H1 (cell line): ENCODE measurements at regions of chr1 and their contacts with region 1.

Region 1: GRCh38 chr1:40143891-40144575 is 17.2 kb upstream of the RLF start:
- DNase-seq: peak; percentile 43 to 75
- H3K4me3 ChIP-seq: no peak overlapping the region
- H3K27ac ChIP-seq: no peak overlapping the region
- H3K4me1 ChIP-seq: peaks cover 0 to 2% (median 0%) of the 10 kb centered on the region in 4 experiments; a peak in 1 of 7 replicates
- H3K27me3 ChIP-seq: peaks cover 0 to 2% (median under 1%) of the 10 kb centered on the region in 4 experiments; a peak in 3 of 7 replicates
- CTCF ChIP-seq: peak in 2 of 3 experiments; percentile 80 to 88; a peak in 3 of 4 replicates
- EP300 ChIP-seq: no peak
- POLR2A ChIP-seq: peak in 1 of 2 experiments; percentile 41; a peak in 1 of 3 replicates
- RAD21 ChIP-seq: peak; percentile 88 to 89

Region 2: GRCh38 chr1:39876144-39876543 is 267.9 kb before region 1 on chr1:
- CTCF ChIA-PET with region 1: no interaction called
- POLR2A ChIA-PET with region 1: no interaction called
- DNase-seq: no peak
- H3K4me3 ChIP-seq: no peak overlapping the region
- H3K27ac ChIP-seq: no peak overlapping the region
- H3K4me1 ChIP-seq: peaks cover 0 to 6% (median 2%) of the 10 kb centered on the region in 4 experiments; a peak in 3 of 7 replicates
- H3K27me3 ChIP-seq: no peaks in the 10 kb centered on the region; a peak in 1 of 7 replicates
- CTCF ChIP-seq: no peak
- EP300 ChIP-seq: no peak
- POLR2A ChIP-seq: no peak
- RAD21 ChIP-seq: no peak

Region 3: DNA sequence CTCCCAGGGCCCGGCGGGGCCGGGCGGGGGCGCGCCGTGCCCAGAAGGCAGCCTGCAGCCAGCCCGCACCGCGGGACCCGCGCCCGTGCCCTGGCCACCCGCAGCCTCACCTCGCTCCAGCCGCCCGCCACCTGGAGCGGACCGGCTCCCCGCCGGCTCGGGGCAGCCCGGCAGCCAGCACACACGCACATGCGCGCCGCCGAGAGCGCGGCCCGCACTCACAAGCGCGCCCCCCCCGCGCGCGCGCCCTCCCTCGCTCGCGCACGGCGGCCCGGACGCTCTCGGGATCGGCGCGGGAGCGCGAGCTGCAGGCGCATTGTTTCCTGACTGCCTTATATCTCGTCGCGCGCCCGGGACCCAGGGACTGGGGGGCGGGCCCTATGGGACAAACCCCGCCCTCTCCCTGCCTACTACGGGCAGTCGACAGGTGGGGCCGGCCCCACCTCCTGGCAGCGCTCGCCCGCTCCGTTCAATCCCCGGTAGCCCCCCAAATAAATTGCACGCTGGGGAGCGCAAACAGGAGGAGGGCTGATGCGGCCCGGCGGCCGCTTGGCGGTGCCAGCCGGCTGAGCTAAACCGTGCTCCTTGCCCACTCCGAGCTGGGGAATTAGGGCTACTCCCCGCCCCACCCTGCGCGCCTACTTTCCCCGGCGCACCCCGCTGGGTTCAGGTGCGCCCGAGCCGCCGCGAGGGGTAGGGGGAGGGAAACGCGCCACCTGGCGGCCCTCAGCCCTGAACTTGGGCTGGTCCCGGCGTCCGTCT is 242.2 kb before region 1 on chr1 and contains the start of gene MYCL:
- CTCF ChIA-PET with region 1: no interaction called
- POLR2A ChIA-PET with region 1: no interaction called
- DNase-seq: peak; percentile 79 to 94
- H3K4me3 ChIP-seq: peak within 1 kb of the TSS; percentile 81 to 89 (median 84)
- H3K27ac ChIP-seq: no peak within 1 kb of the TSS
- H3K4me1 ChIP-seq: peaks cover 13 to 29% (median 17%) of the 10 kb centered on the region in 4 experiments; a peak in 6 of 7 replicates
- H3K27me3 ChIP-seq: peaks cover 3 to 12% (median 10%) of the 10 kb centered on the region in 4 experiments; a peak in 6 of 7 replicates
- CTCF ChIP-seq: peak; percentile 76 to 86 (median 76)
- EP300 ChIP-seq: peak; percentile 1 to 63; a peak in 1 of 3 replicates
- POLR2A ChIP-seq: peak in 1 of 2 experiments; percentile 18; a peak in 1 of 3 replicates
- RAD21 ChIP-seq: peak; percentile 57 to 77
- total RNA-seq, gene MYCL: 28.8 and 29.9 TPM in 2 replicates

Region 4: DNA sequence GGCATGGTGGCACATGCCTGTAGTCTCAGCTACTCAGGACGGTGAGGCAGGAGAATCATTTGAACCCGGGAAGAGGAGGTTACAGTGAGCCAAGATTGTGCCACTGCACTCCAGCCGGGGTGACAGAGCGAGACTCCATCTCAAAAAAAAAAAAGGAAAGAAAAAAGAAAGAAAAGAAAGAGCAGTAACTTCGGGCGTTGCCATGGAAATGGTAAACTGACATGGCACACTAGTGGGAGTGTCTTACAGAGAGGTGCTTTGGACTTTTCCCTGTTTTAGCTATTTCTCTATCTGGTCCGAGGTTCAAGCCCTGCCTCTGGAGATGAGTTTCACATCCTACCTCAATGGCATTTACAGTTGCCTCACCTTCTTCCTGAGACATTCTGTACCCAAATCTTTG is 23.9 kb before region 1 on chr1:
- CTCF ChIA-PET with region 1: interaction called, 10 read pairs
- POLR2A ChIA-PET with region 1: no interaction called
- DNase-seq: no peak
- H3K4me3 ChIP-seq: no peak overlapping the region
- H3K27ac ChIP-seq: no peak overlapping the region
- H3K4me1 ChIP-seq: no peaks in the 10 kb centered on the region
- H3K27me3 ChIP-seq: no peaks in the 10 kb centered on the region
- CTCF ChIP-seq: no peak
- EP300 ChIP-seq: no peak
- POLR2A ChIP-seq: no peak
- RAD21 ChIP-seq: no peak